ENCODE measurements at regions of chr20 and their contacts with region 1.

Region 1: GRCh38 chr20:7285918-7286556 is 518.6 kb downstream of the BMP2 start:
- DNase-seq: peak; percentile 66 to 81
- H3K4me3 ChIP-seq: no peak overlapping the region
- H3K4me1 ChIP-seq: no peaks in the 10 kb centered on the region; the same call in 1 of the 2 replicates
- H3K27me3 ChIP-seq: no peaks in the 10 kb centered on the region

Region 2: DNA sequence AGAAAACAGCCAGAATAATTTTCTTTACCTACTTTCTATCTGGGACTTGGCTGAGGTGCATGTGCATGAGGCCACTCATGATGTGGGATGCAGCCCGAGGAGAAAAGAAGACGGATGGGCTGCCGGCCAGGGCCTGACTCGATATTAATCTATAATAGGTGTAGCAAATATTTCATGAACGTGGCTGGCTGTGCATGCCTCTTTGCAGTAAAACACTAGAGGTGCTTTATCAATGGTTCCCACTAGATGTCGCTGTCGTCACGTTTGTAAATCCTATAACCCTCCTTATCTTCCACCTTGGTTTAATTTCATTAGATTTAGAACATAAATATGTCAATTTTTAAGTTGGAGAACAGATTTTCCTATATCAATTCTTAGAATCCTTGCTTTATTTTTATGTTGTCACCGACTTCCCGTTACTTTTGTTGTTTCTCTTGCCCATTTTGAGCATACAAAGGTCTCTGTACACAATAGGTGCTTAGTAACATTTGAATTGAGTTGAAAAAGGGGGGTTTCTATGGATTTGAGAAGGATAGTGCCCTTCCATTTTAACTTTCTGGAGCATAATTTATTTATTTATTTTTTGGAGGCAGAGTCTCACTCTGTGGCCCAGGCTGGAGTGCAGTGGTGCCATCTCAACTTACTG is 1143.6 kb before region 1 on chr20:
- in situ Hi-C with region 1: loop called (anchors 25 kb)
- DNase-seq: peak; percentile 53 to 74
- H3K4me3 ChIP-seq: no peak overlapping the region
- H3K4me1 ChIP-seq: no peaks in the 10 kb centered on the region
- H3K27me3 ChIP-seq: peaks cover 1% of the 10 kb centered on the region; the same call in 1 of the 2 replicates

Region 3: GRCh38 chr20:6767536-6768227 is 518.4 kb before region 1 on chr20 and contains the start of gene BMP2:
- in situ Hi-C with region 1: loop called (anchors 10 kb)
- DNase-seq: peak; percentile 3 to 52
- H3K4me3 ChIP-seq: peak within 1 kb of the TSS; percentile 43
- H3K4me1 ChIP-seq: no peaks in the 10 kb centered on the region; the same call in 1 of the 2 replicates
- H3K27me3 ChIP-seq: peaks cover 18% of the 10 kb centered on the region

Region 4: DNA sequence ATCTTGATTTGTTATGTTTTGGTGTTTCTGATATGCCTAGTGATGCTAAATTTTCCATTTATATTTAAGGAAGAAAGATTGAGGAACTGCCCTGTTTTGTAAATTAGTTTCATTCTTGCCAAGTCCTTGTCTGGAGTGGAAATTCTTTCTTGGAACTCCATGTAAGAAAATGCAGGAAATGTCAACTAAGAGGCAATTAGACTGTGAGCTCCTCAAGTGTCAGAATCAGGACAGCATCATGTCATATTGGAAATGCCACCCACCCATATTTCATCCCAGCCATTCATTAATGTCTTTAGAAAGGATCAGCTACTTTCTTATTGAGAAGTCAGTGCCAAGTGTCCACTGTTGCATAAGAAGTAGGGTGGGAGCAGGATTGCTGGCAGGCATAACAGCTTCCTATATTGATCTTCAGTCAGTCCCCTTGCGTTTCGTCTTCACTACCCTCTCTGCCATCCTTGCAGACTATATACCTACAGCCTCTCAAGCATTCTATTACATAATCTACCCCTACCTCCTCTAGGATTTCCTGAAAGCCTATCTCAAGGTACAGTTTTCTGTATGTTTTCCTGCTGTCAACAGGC is 611.8 kb after region 1 on chr20:
- in situ Hi-C with region 1: no loop called
- DNase-seq: no peak
- H3K4me3 ChIP-seq: no peak overlapping the region
- H3K4me1 ChIP-seq: no peaks in the 10 kb centered on the region
- H3K27me3 ChIP-seq: no peaks in the 10 kb centered on the region